OCI-LY7 (cell line): ENCODE measurements at regions of chr11 and their contacts with region 1.

Region 1: DNA sequence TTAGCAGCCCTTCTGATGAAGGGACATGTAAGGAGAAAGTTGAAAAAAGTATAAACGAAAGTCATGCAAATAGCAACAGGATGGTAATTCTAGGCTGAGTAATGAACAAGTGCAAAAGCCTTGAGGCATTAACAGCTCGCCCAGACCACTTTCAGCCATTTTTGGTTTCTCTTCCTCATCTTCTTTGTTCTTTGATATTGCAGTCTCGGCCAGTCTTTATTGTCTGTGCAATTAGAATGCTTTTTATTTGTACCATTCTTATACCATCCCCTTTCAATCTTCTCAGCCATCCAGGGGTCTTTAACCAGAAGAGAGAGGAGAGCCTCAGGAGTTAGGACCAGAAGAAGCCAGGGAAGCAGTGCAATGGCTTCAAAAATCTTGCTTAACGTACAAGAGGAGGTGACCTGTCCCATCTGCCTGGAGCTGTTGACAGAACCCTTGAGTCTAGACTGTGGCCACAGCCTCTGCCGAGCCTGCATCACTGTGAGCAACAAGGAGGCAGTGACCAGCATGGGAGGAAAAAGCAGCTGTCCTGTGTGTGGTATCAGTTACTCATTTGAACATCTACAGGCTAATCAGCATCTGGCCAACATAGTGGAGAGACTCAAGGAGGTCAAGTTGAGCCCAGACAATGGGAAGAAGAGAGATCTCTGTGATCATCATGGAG is 7.3 kb downstream of the TRIM34 start:
- DNase-seq: peak; percentile 80
- H3K4me3 ChIP-seq: peak overlapping the region; percentile 44
- H3K27ac ChIP-seq: peak overlapping the region; percentile 61
- H3K4me1 ChIP-seq: peaks cover 17% of the 10 kb centered on the region
- CTCF ChIP-seq: no peak

Region 2: DNA sequence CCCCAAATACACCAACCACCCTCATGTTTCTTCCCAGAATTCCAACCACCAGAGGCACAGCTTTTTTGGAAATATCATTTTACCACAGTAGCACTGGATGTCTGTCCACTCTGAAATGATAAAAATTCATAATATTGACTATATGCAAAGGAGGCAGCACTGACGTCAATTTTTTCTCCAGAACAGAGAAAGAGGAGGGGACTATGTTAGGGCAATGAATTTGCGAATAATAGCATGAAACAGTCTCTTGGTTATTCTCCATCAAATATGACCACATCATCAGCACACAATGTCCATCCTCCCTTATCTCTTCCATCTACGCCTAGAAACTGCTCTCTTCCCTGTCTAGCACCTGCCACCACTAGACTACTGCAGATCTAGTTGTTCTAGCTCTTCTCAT is 14.0 kb after region 1 on chr11:
- CTCF ChIA-PET with region 1: no interaction called
- POLR2A ChIA-PET with region 1: interaction called, 10 read pairs
- intact Hi-C with region 1: no loop called
- DNase-seq: no peak
- H3K4me3 ChIP-seq: no peak overlapping the region
- H3K27ac ChIP-seq: no peak overlapping the region
- H3K4me1 ChIP-seq: no peaks in the 10 kb centered on the region
- CTCF ChIP-seq: no peak